Posterior vena cava (tissue), 2 donors: ENCODE measurements at regions of chr2 and their contacts with region 1.

Region 1: DNA sequence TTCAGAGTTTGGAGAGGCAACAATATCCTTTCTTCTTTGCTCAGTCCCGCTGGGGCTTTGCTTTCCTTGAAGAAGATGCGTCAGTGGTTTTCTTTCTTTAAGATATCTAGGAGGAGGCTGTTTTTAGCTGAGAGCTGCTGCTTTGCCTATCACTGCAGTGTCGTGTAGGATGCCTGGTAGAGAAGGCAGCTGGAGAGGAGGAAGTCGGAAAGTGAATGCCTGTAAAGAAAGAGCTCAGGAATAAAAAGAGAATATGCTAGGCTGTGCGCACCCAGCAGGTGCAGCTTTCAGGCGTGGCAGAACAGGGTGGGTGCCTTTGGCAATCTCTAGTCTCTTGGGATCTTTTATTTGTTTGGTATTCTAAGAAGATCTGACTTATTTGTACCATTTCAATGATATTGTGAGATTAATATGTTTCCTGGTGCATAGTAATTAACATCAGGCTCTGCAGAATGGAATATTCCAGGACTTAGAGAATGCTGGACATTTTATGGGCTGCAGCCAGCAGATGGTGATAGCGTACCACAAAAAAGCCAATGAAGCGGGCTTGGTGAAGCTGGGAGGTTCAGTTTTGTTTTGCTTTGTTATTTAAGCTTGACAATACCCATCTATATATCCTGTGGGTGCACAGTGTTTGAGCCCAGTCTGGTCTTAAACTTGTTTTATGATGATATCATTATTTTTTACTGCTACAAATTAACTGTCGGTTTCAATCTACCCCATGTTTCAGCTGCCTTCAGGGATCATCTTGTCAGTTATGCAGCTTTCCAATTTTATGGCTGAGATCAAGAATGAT is 34.9 kb downstream of the CAVIN2 start:
- DNase-seq: no peak

Region 2: DNA sequence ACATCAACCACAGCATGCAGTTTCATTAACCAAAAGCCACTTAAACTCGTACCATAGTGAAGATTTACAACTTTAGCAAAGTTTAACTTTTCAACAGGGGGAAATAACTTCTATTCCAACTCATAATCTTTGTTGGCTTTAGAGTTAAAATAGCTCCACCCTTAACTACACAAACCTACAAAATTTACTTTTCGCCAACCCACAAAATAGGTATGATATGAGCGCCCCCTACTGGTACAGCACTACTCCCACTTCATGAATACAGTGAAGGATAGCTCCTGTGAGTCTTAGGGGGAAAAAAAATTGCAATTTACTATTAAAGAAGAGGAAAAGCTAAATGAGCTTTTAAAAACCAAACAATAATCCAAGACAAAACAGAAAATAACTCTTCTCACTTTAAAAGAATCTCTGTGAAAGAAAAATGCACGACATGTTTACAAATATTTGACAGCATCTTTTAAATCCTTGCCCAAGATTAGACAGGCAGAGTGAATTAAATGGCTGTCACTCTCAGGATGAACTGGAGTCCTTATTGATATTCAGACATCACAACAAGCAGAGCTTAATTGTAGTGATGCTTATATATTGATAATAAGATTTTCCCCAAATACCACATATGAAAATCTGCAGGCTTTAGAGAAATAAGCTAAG is 350.5 kb after region 1 on chr2:
- intact Hi-C with region 1: loop called (anchors 5 kb)
- DNase-seq: no peak